ENCODE measurements at regions of chr6 and their contacts with region 1.

Region 1: DNA sequence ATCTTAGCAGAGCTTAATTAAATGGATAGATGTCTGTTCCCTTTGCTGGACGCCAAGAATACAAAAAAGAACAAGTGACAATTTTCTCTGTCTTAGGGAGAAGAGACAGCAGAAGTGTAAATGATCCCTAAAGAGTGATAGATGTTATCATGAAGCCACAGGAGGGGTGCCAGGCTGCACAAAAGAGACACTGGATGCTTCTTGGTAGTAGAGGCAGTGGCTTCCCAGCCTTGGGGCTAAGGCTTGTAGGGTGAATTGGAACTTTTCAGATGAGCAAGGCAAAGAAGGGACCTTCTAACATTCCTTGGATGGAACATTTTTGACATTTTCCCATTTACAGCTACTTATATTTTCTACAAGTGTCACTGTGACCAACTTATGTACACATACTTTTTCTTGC is 58.0 kb downstream of the CCN2 start:
- DNase-seq: no peak
- H3K4me3 ChIP-seq: no peak overlapping the region
- H3K27ac ChIP-seq: no peak overlapping the region
- H3K4me1 ChIP-seq: peaks cover 0 to 8% (median 3%) of the 10 kb centered on the region in 4 experiments; a peak in 3 of 7 replicates
- H3K27me3 ChIP-seq: no peaks in the 10 kb centered on the region
- CTCF ChIP-seq: no peak
- EP300 ChIP-seq: no peak
- POLR2A ChIP-seq: no peak
- RAD21 ChIP-seq: no peak

Region 2: GRCh38 chr6:131733376-131734016 is 159.7 kb before region 1 on chr6:
- CTCF ChIA-PET with region 1: no interaction called
- POLR2A ChIA-PET with region 1: no interaction called
- DNase-seq: no peak
- H3K4me3 ChIP-seq: no peak overlapping the region
- H3K27ac ChIP-seq: no peak overlapping the region
- H3K4me1 ChIP-seq: no peaks in the 10 kb centered on the region
- H3K27me3 ChIP-seq: no peaks in the 10 kb centered on the region
- CTCF ChIP-seq: no peak
- EP300 ChIP-seq: no peak
- POLR2A ChIP-seq: no peak
- RAD21 ChIP-seq: no peak

Region 3: GRCh38 chr6:131909408-131910218 is 16.4 kb after region 1 on chr6:
- CTCF ChIA-PET with region 1: interaction called, 8 read pairs
- POLR2A ChIA-PET with region 1: interaction called, 10 read pairs
- DNase-seq: peak in 1 of 2 experiments; percentile 89
- H3K4me3 ChIP-seq: no peak overlapping the region
- H3K27ac ChIP-seq: no peak overlapping the region
- H3K4me1 ChIP-seq: peaks cover 0 to 8% (median 5%) of the 10 kb centered on the region in 4 experiments; a peak in 3 of 7 replicates
- H3K27me3 ChIP-seq: no peaks in the 10 kb centered on the region
- CTCF ChIP-seq: peak in 2 of 3 experiments; percentile 74 to 75; a peak in 3 of 4 replicates
- EP300 ChIP-seq: no peak
- POLR2A ChIP-seq: peak in 1 of 2 experiments; percentile 70; a peak in 1 of 3 replicates
- RAD21 ChIP-seq: peak; percentile 67 to 72

Measured in H1 (cell line).